Activated CD4-positive, alpha-beta T cell treated with anti-CD3 and anti-CD28 coated beads, Interleukin-2, amount 10 ng/mL, durations not matched to agents 24 days and 14 days (primary cell): ENCODE measurements at regions of chr9 and their contacts with region 1.

Region 1: DNA sequence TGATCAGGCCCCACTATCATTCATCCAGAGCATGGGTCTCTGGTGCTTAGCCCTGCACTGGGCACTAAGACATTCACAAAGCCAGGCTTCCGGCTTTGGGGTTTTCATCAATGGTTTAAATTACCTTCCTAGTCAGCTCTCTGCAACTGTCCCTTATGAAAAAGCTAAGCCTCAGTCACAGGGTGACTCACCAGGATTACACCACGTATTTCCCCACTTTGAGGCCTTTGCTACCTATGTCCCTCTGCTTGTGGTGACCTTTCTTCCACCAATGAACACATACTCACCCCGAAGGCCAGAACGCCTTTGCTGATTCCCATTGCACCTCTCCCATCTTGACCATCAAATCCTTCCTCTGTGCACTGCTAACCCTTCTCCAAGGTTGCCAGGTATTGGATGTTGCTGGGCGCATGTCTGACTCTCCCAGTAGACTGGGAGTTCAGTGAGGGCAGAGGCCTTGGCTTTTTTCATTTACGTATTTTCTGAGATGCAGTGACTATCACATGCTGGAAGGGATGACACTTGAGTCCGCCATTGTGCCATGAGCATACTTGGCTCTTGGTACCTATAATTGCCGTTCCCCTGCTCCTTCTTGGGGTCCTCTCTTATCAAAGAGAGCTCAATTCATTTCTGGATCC is 58.7 kb upstream of the TNFSF8 start:
- DNase-seq: peak; percentile 79
- H3K4me3 Mint-ChIP-seq: peak overlapping the region; percentile 65
- H3K27ac Mint-ChIP-seq: peak overlapping the region; percentile 97
- H3K4me1 Mint-ChIP-seq: peaks cover 74% of the 10 kb centered on the region
- H3K27me3 Mint-ChIP-seq: no peaks in the 10 kb centered on the region

Region 2: DNA sequence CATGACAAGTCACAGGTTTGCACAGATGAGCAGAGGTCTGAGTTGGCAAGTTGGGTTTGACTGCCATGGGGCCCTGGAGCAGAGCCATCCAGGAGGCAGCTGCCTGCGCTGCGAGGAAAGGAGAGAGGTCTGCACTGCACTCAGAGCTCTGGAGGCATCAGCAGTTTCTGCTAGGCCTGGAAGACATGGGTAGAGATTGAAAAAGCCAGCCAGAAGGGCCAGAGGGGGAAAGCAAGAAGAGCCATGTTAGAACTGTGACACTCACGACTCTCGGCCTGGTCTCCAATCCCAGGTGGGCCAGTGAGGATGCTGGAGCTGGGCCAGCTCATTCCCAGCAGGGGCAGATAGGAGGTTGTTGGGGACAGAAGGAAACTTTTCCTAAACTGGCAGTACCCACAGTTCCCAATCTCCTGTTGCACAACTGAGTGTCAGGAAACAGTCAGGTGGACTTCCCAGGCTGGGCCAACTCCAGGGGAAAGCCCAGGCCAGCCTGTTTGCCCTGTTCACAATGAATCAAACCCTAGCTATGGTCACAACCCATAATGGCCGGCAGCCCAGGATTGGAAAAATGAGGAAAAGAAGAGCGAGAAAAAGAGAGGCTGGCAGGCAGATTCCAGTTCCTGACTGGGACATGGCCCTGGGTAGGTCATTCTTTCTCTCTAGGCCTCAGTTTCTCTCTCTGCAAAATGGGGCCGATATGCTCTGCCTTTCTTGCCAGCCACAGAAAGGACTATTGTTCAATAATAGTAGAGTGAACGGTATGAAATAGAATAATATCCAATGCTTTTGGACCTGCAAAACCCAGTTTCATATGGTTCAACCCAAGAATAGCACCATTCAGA is 674.0 kb before region 1 on chr9:
- intact Hi-C with region 1: no loop called
- DNase-seq: no peak
- H3K4me3 Mint-ChIP-seq: no peak overlapping the region
- H3K27ac Mint-ChIP-seq: no peak overlapping the region
- H3K4me1 Mint-ChIP-seq: peaks cover 4% of the 10 kb centered on the region
- H3K27me3 Mint-ChIP-seq: no peaks in the 10 kb centered on the region

Region 3: DNA sequence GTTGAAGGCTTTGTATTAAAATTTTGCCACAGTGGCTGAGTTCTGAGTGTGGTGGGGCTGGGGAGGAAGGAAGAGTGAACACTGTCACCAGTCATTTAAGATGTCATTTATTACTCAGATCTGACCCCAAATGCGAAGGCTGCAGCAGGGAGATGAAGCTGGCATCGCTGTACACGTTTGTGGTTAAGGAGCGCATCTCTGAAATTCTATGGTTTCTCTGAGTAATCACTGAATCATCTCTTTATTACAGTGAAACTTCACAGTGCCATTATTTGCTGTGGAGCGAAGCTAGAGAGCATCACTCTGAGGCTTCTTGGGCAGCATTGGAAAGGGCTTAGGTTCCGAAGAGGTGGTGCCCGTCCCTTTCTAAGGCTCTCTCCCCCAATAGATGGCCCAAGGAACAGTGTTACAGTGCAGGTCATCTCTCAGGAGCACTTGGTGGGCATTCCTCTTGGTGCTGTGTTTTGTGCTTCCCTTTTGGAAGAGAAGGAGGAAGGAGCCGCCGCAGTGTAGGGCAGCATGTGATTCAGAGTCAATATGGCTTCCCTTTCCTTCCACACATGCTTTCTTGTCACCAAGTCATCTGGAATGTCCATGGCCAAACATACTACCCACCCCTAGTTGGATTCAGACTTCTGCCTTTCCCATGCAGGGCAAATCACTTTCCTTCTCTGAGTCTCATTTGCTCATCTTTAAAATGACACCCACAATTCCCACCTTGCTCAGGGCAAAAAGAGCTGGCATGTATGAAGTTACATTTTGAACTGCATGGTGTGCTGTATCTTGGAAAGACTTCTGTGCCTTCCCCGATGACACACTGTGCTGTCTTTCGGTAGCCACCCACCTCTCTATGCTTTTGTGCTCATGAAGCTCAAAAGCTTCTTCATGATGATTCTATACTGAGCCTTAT is 297.8 kb before region 1 on chr9:
- intact Hi-C with region 1: loop called (anchors 1 kb)
- DNase-seq: peak; percentile 93
- H3K4me3 Mint-ChIP-seq: peak overlapping the region; percentile 59
- H3K27ac Mint-ChIP-seq: peak overlapping the region; percentile 97
- H3K4me1 Mint-ChIP-seq: peaks cover 80% of the 10 kb centered on the region
- H3K27me3 Mint-ChIP-seq: no peaks in the 10 kb centered on the region

Region 4: DNA sequence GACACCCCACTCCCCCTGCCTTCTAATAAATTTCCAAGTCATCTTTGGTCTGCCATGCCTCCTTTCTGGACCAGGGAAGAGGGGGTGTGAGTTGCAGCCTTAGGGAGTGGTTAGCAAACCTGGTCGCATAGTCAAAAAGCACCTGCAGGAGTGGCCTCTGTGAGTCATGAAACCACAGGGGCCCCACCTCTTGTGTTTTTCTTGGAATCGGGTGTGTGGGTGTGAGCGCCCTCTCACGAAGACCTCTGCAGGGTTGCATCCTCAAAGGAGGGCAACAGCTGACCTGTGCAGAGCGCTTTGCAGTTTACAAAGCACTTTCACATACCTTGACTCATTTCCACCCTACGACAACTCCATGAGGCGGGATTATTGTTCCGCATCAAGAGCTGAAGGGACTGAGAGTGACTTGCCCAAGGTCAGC is 270.3 kb before region 1 on chr9:
- intact Hi-C with region 1: loop called (anchors 1 kb)
- DNase-seq: peak; percentile 98
- H3K4me3 Mint-ChIP-seq: peak overlapping the region; percentile 74
- H3K27ac Mint-ChIP-seq: peak overlapping the region; percentile 97
- H3K4me1 Mint-ChIP-seq: peaks cover 81% of the 10 kb centered on the region
- H3K27me3 Mint-ChIP-seq: no peaks in the 10 kb centered on the region

Region 5: DNA sequence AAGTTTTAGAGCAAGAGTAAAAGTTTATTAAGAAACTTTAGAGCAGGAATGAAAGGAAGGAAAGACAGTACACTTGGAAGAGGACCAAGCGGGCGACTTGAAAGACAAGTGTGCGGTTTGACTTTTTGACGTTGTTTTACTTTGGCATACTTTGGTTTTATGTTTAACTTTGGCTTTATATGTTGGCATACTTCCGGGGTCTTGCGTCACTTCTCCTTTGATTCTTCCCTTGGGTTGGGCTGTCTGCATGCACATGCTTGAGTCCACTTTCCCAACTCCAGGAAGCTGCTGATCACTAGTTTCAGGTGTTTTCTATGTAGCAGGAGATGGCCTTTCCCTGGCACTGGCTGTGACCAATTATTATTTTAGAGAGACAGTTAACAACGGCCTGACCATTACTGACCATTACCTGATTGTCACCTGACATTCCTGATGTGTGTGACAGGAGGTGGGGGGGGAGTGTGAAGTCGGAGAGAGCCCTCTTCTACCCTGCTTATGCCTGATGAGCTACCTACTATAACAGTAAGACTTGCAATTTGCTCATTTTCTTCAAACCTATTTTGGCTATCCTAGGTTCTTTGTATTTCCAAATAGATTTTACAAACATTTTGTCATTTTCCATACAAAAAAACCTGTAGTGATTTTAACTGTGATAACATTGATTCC is 104.2 kb before region 1 on chr9:
- intact Hi-C with region 1: no loop called
- DNase-seq: no peak
- H3K4me3 Mint-ChIP-seq: no peak overlapping the region
- H3K27ac Mint-ChIP-seq: no peak overlapping the region
- H3K4me1 Mint-ChIP-seq: peaks cover 15% of the 10 kb centered on the region
- H3K27me3 Mint-ChIP-seq: no peaks in the 10 kb centered on the region

Region 6: GRCh38 chr9:114919611-114920010 is 69.5 kb before region 1 on chr9:
- intact Hi-C with region 1: no loop called
- DNase-seq: peak; percentile 56
- H3K4me3 Mint-ChIP-seq: peak overlapping the region; percentile 59
- H3K27ac Mint-ChIP-seq: peak overlapping the region; percentile 78
- H3K4me1 Mint-ChIP-seq: peaks cover 89% of the 10 kb centered on the region
- H3K27me3 Mint-ChIP-seq: no peaks in the 10 kb centered on the region

Region 7: DNA sequence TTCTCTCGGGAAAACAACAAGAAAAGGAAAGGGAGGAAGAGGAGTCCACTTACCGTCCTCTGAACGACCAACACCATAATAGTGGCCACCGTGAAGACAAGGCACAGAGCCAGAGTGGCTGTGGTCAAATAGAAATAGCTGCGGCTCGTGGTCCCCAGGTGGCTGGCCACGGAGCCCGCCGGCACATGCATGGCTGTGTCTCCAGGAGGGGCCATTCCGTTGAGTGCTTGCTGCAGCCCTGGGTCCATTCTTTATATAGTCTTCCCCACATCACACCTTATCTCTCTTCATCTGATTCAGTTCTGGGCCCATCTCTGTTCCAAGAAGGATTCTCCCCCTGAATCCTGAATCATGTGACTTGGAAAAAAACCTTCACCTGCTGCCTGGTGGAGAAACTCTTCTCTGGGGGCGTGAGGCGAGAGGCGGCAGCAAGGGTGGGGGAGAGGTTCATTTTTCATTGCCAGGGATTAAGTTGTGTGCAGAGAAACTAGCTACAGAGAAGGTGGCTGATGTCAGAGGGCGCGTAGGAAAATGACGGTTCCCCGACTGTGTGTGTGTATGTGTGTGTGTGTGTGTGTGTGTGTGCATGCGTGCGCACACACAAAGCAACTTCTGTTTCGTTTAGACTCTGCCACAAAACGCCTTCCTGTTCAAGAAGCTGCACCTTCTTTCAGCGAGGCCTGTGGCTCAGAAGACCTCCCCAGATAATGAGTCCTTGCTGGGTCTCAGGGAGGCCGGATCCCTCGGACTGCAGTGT is 58.8 kb before region 1 on chr9 and contains the start of gene TNFSF8:
- intact Hi-C with region 1: loop called (anchors 1 kb)
- DNase-seq: peak; percentile 94
- H3K4me3 Mint-ChIP-seq: peak within 1 kb of the TSS; percentile 90
- H3K27ac Mint-ChIP-seq: peak within 1 kb of the TSS; percentile 99
- H3K4me1 Mint-ChIP-seq: peaks cover 59% of the 10 kb centered on the region
- H3K27me3 Mint-ChIP-seq: no peaks in the 10 kb centered on the region
- total RNA-seq, gene TNFSF8: 148 and 150 TPM in 2 replicates

Region 8: GRCh38 chr9:114968671-114969070 is 20.4 kb before region 1 on chr9:
- intact Hi-C with region 1: loop called (anchors 1 kb)
- DNase-seq: no peak
- H3K4me3 Mint-ChIP-seq: no peak overlapping the region
- H3K27ac Mint-ChIP-seq: peak overlapping the region; percentile 62
- H3K4me1 Mint-ChIP-seq: peaks cover 20% of the 10 kb centered on the region
- H3K27me3 Mint-ChIP-seq: no peaks in the 10 kb centered on the region

Region 9: GRCh38 chr9:115008536-115009270 is 19.6 kb after region 1 on chr9:
- intact Hi-C with region 1: loop called (anchors 1 kb)
- DNase-seq: peak; percentile 70
- H3K4me3 Mint-ChIP-seq: no peak overlapping the region
- H3K27ac Mint-ChIP-seq: no peak overlapping the region
- H3K4me1 Mint-ChIP-seq: peaks cover 74% of the 10 kb centered on the region
- H3K27me3 Mint-ChIP-seq: no peaks in the 10 kb centered on the region

Region 10: GRCh38 chr9:115204904-115205453 is 215.9 kb after region 1 on chr9:
- intact Hi-C with region 1: no loop called
- DNase-seq: no peak
- H3K4me3 Mint-ChIP-seq: no peak overlapping the region
- H3K27ac Mint-ChIP-seq: peak overlapping the region; percentile 51
- H3K4me1 Mint-ChIP-seq: peaks cover 37% of the 10 kb centered on the region
- H3K27me3 Mint-ChIP-seq: peaks cover 14% of the 10 kb centered on the region